MCF 10A (cell line): ENCODE measurements at regions of chr18 and their contacts with region 1.

Region 1: DNA sequence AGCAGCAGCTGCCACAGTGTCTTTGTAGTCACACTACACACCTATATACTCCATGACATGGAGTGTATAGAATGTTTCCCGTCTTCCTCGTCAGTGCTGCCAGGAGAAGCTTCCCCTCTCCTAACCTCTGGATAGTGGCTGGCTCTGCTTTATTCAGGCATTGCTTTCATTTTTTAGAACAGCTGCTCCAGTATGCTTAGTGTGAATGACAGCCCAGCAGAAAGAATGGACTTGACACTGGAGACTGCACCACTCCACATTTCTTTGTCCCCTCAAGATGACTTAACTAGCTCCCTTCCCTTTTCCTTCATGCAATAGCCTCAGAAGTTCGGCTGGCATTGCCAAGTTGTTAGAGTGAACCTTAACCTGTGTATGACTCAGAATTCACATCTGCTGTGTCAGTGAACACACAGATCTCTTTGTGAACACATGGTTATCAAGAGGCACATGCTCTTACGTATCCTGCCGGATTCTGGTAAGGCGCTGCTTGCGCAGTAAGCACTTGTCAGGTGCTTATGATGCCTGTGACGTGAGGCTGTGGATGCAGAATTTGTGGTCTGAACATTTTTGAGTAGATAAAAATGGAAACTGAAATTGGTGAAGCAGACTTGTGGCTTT is 73.9 kb downstream of the NEDD4L start:
- DNase-seq: peak; percentile 82
- H3K4me3 Mint-ChIP-seq: peak overlapping the region; percentile 1
- H3K27ac Mint-ChIP-seq: peak overlapping the region; percentile 86
- H3K4me1 Mint-ChIP-seq: peaks cover 20% of the 10 kb centered on the region
- H3K27me3 Mint-ChIP-seq: no peaks in the 10 kb centered on the region
- CTCF ChIP-seq: no peak

Region 2: DNA sequence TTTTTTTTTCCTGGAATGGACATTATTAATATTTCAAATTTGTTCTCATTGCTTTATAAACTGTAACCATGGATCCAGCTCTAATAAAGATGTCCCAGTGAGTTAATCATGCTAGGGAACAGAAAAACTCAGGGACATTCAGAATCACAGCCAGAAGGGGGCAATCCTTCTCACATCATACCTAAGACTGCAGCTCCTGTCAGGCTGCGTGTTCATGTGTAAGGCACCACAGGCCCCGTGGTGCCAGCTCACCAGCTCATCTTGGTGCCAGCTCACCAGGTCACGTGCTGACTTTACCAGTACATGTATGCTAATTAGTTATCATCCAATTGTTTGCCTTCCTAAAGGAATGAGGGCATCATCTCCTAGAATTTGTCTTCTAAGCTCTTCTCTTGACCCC is 158.6 kb before region 1 on chr18:
- CTCF ChIA-PET with region 1: interaction called, 8 read pairs
- POLR2A ChIA-PET with region 1: no interaction called
- intact Hi-C with region 1: loop called (anchors 1 kb)
- DNase-seq: peak; percentile 84
- H3K4me3 Mint-ChIP-seq: no peak overlapping the region
- H3K27ac Mint-ChIP-seq: no peak overlapping the region
- H3K4me1 Mint-ChIP-seq: peaks cover 6% of the 10 kb centered on the region
- H3K27me3 Mint-ChIP-seq: no peaks in the 10 kb centered on the region
- CTCF ChIP-seq: peak; percentile 53

Region 3: DNA sequence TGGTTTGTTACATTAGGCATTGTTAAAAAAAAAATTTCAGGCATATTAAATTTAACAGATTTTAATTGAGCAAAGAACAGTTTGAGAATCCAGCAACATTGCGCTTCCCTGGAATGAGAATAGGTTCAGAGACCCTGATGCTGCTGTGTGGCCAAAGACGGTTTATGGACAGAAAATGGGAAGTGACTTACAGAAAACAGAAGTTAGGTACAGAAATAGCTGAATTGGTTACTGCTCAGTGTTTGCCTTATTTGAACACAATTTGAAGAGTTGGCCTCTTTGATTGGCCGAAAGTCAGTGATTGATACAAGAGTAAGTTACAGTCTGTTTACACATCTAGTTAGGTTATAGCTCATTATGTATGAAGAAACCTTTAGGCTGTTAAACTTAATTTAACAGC is 79.8 kb before region 1 on chr18:
- CTCF ChIA-PET with region 1: interaction called, 17 read pairs
- POLR2A ChIA-PET with region 1: interaction called, 7 read pairs
- intact Hi-C with region 1: loop called (anchors 1 kb)
- DNase-seq: no peak
- H3K4me3 Mint-ChIP-seq: no peak overlapping the region
- H3K27ac Mint-ChIP-seq: no peak overlapping the region
- H3K4me1 Mint-ChIP-seq: no peaks in the 10 kb centered on the region
- H3K27me3 Mint-ChIP-seq: no peaks in the 10 kb centered on the region
- CTCF ChIP-seq: no peak

Region 4: GRCh38 chr18:58051765-58052460 is 66.0 kb before region 1 on chr18:
- CTCF ChIA-PET with region 1: interaction called, 93 read pairs
- POLR2A ChIA-PET with region 1: interaction called, 65 read pairs
- intact Hi-C with region 1: loop called (anchors 1 kb)
- DNase-seq: peak; percentile 42
- H3K4me3 Mint-ChIP-seq: no peak overlapping the region
- H3K27ac Mint-ChIP-seq: peak overlapping the region; percentile 16
- H3K4me1 Mint-ChIP-seq: peaks cover 23% of the 10 kb centered on the region
- H3K27me3 Mint-ChIP-seq: no peaks in the 10 kb centered on the region
- CTCF ChIP-seq: peak; percentile 35

Region 5: DNA sequence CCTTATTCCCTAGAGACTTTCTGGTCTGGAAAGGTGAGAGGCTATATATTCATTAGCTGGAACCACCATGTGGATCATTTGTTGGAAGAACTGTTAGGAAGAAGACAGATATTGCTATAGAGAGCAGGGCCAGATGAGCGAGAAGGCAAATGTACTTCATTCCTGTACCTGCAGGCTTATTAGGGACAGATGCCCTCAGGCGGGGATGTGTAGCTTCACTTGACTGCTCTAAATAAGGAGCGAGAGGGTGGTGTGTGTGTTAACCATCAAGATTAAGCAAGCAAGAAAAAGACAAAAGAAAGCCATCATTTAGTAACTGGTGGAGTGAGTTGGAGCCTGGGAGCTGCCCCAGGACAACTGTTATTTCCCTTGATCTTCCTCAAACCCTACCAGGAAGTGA is 37.4 kb before region 1 on chr18:
- CTCF ChIA-PET with region 1: interaction called, 7 read pairs
- POLR2A ChIA-PET with region 1: interaction called, 30 read pairs
- intact Hi-C with region 1: no loop called
- DNase-seq: peak; percentile 18
- H3K4me3 Mint-ChIP-seq: no peak overlapping the region
- H3K27ac Mint-ChIP-seq: peak overlapping the region; percentile 57
- H3K4me1 Mint-ChIP-seq: peaks cover 30% of the 10 kb centered on the region
- H3K27me3 Mint-ChIP-seq: no peaks in the 10 kb centered on the region
- CTCF ChIP-seq: no peak

Region 6: DNA sequence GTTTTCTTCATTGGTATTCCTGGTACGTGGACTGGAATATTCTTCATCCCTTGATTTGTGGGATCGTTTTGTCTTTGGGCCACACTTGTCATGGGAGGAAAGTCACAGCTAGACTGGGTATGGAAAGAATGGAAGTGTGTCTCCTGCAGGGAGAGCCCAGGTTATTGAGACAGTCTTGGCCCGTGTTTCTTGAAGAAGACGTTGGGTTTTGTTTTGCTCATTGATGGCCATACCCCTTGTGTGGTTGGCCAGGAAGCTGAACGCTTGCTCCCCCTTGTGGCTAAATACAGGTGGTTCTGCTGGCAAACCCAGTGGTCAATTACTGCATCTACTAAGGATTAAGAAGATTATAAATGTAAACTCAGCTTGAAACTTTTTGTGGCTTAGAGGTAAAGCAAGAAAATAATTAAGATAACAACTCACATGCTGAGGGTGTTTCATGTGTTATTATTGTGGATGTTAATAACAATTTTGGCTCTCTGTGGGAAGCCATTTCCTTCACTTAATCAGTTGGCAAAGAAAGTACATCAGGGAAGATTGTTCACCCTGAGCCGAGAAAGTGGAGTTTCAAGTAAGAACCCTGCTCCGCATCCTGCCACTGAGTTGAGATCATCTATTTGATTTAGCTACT is 17.9 kb after region 1 on chr18:
- CTCF ChIA-PET with region 1: interaction called, 10 read pairs
- POLR2A ChIA-PET with region 1: interaction called, 5 read pairs
- intact Hi-C with region 1: no loop called
- DNase-seq: peak; percentile 85
- H3K4me3 Mint-ChIP-seq: no peak overlapping the region
- H3K27ac Mint-ChIP-seq: no peak overlapping the region
- H3K4me1 Mint-ChIP-seq: peaks cover 3% of the 10 kb centered on the region
- H3K27me3 Mint-ChIP-seq: no peaks in the 10 kb centered on the region
- CTCF ChIP-seq: peak; percentile 64

Region 7: GRCh38 chr18:58288922-58289797 is 171.3 kb after region 1 on chr18:
- CTCF ChIA-PET with region 1: no interaction called
- POLR2A ChIA-PET with region 1: no interaction called
- intact Hi-C with region 1: no loop called
- DNase-seq: peak; percentile 80
- H3K4me3 Mint-ChIP-seq: peak overlapping the region; percentile 29
- H3K27ac Mint-ChIP-seq: peak overlapping the region; percentile 94
- H3K4me1 Mint-ChIP-seq: peaks cover 55% of the 10 kb centered on the region
- H3K27me3 Mint-ChIP-seq: no peaks in the 10 kb centered on the region
- CTCF ChIP-seq: no peak

Region 8: GRCh38 chr18:58344861-58345463 is 227.1 kb after region 1 on chr18:
- CTCF ChIA-PET with region 1: no interaction called
- POLR2A ChIA-PET with region 1: no interaction called
- intact Hi-C with region 1: no loop called
- DNase-seq: no peak
- H3K4me3 Mint-ChIP-seq: no peak overlapping the region
- H3K27ac Mint-ChIP-seq: no peak overlapping the region
- H3K4me1 Mint-ChIP-seq: no peaks in the 10 kb centered on the region
- H3K27me3 Mint-ChIP-seq: no peaks in the 10 kb centered on the region
- CTCF ChIP-seq: no peak